Cardiac septum (tissue), 1 donor: ENCODE measurements at regions of chr3 and their contacts with region 1.

Region 1: GRCh38 chr3:150870396-150870795 is 34.8 kb downstream of the MINDY4B start:
- DNase-seq: no peak

Region 2: DNA sequence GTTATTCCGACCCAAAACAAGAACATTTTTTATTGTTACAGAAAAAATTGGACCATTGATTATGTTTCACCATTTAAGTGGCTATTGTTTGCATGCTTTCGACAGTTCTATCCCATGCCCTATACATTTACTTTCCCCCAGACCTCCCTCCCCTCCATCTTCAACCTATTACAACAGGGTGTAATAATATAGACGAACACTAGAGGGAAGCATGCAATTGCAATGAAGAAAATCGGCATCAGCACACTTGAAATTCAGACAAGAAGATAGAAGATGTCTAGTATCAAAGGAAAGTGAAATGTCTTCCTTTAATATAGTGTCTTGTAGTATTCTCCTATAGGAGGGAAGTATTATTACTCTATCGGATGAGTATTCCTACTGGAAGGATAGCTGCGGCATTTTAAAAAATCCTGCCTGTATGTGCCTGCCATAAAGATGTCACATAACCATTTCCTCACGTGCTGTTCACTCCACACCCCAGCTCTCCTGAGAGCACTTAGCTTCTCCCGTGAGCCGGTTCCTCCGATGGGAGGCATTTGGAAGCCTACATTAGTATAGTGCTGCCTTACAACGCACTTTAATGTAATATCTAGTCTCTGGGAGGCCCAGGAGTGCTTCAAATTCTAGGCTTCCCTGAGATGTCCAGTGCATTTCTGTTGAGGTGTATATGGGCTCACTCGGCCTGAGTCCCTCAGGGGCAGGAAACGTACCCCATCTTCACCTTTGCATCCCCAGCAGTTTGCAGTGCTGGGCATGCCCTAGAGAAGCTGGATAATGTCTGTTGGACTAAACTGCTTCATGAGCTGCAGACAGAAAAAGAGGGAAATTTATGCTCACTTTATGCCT is 148.9 kb before region 1 on chr3:
- intact Hi-C with region 1: loop called (anchors 2 kb)
- DNase-seq: no peak

Region 3: DNA sequence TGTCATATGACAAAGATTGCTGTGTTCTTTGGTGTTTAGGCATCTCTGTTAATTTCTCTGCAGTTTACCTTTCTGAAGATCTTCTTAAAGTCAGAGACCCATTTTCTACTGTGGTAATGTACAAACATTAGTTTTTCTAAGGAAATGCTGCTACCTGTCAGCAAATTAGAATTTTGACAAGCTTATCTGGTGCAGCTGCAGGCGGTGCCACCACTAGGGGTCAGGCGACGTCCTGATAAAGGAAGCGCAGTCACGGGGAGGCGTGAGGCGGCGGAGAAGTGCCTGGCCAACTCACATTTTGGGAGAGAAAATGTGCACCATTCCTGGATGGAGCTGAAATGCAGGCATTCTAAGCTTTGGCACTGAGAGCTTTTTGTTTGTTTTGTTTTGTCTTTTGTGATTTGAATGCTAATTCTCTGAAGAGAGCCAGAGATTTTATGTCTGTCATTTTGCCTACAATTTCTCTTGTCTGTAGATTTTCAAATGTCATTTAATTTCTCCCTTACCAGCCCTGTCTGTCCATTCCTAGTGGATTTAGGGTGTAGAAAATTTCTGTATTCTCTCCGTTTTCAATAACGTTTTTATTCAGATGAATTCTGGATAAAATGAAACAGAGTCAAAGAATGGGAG is 82.5 kb before region 1 on chr3:
- intact Hi-C with region 1: loop called (anchors 5 kb)
- DNase-seq: peak; percentile 93

Region 4: GRCh38 chr3:150913133-150913922 is 42.9 kb after region 1 on chr3:
- intact Hi-C with region 1: loop called (anchors 1 kb)
- DNase-seq: no peak